Heart right ventricle (tissue), 16 donors: ENCODE measurements at regions of chr11 and their contacts with region 1.

Region 1: GRCh38 chr11:119381181-119381988 is at the start of gene USP2:
- DNase-seq: peak; percentile 95 to 97
- ATAC-seq: peak; percentile 87 to 98 (median 94)
- H3K4me3 ChIP-seq: peak within 1 kb of the TSS; percentile 5 to 66 (median 52)
- H3K27ac ChIP-seq: peak within 1 kb of the TSS in 9 of 10 donors; percentile 62 to 83 (median 73)
- H3K4me1 ChIP-seq: peaks cover 9 to 40% (median 28%) of the 10 kb centered on the region in 9 donors
- H3K27me3 ChIP-seq: peaks cover 0 to 4% (median 0%) of the 10 kb centered on the region in 7 donors
- CTCF ChIP-seq: peak; percentile 78 to 99 (median 94)
- total RNA-seq, gene USP2: 87.0 to 183 (median 136) TPM

Region 2: GRCh38 chr11:119339589-119340343 is 41.6 kb before region 1 on chr11:
- intact Hi-C with region 1: loop called in 1 of 10 experiments (anchors 5 kb)
- DNase-seq: peak; percentile 77 to 85
- ATAC-seq: peak; percentile 52 to 80 (median 65)
- H3K4me3 ChIP-seq: peak overlapping the region; percentile 61 to 91 (median 78)
- H3K27ac ChIP-seq: peak overlapping the region; percentile 85 to 100 (median 97)
- H3K4me1 ChIP-seq: peaks cover 22 to 64% (median 56%) of the 10 kb centered on the region in 9 donors
- H3K27me3 ChIP-seq: peaks cover 0 to 38% (median 0%) of the 10 kb centered on the region in 7 donors
- CTCF ChIP-seq: peak; percentile 93 to 98 (median 96)

Region 3: GRCh38 chr11:119356349-119357031 is 24.9 kb before region 1 on chr11:
- intact Hi-C with region 1: loop called in 1 of 10 experiments (anchors 2 kb)
- DNase-seq: peak; percentile 81 to 84
- ATAC-seq: peak; percentile 66 to 86 (median 76)
- H3K4me3 ChIP-seq: peak overlapping the region; percentile 36 to 63 (median 58)
- H3K27ac ChIP-seq: peak overlapping the region; percentile 27 to 98 (median 66)
- H3K4me1 ChIP-seq: peaks cover 19 to 73% (median 42%) of the 10 kb centered on the region in 9 donors
- H3K27me3 ChIP-seq: peaks cover 0 to 7% (median 0%) of the 10 kb centered on the region in 7 donors
- CTCF ChIP-seq: peak; percentile 70 to 93 (median 86)